ENCODE measurements at regions of chr19 and their contacts with region 1.

Region 1: DNA sequence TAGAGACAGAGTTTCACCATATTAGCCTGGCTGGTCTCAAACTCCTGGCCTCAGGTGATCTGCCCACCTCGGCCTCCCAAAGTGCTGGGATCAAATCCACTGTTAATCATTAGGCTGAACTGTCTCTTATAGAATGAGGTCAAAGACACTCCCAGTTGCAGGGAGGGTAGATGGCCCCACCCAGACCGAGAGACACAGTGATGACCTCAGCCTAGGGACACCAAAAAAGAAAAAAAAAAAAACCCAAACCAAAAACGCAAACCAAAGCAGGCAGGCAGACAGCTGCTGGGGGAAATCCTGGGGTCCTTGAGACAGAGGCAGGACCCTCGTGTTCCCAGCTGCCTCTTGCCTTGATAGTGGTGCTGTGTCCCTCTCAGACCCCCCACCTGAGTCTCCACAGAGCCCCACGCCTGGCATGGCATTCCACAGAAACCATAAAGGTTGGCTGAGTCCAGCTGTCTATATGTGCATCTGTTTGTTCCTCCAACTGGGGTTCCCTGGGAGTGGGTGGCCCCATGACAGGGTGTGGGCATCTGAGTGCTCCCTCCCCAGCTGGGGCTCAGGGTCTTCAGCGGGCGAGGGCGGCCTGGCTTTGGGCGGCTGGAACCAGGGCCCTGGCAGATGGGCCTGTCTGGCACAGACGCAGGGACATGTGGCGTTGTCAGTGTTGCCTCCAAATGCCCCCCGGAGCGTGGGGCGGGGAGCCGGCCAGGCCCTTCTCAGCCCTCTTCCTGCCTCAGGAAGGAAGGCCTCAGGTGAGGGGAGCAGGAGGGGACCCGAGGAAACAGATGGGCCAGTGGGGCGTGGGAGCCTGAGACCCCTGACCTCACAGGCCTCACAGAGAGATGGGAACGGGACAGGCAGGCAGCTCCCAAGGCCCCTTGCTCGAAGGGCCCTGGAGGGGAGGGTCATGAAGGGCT is 5.2 kb downstream of the DAND5 start:
- DNase-seq: no peak
- ATAC-seq: peak in 1 of 4 donors; percentile 22
- H3K4me3 ChIP-seq: no peak overlapping the region
- H3K27ac ChIP-seq: no peak overlapping the region
- H3K4me1 ChIP-seq: peaks cover 0 to 2% (median 0%) of the 10 kb centered on the region in 3 donors
- H3K27me3 ChIP-seq: no peaks in the 10 kb centered on the region
- CTCF ChIP-seq: no peak

Region 2: DNA sequence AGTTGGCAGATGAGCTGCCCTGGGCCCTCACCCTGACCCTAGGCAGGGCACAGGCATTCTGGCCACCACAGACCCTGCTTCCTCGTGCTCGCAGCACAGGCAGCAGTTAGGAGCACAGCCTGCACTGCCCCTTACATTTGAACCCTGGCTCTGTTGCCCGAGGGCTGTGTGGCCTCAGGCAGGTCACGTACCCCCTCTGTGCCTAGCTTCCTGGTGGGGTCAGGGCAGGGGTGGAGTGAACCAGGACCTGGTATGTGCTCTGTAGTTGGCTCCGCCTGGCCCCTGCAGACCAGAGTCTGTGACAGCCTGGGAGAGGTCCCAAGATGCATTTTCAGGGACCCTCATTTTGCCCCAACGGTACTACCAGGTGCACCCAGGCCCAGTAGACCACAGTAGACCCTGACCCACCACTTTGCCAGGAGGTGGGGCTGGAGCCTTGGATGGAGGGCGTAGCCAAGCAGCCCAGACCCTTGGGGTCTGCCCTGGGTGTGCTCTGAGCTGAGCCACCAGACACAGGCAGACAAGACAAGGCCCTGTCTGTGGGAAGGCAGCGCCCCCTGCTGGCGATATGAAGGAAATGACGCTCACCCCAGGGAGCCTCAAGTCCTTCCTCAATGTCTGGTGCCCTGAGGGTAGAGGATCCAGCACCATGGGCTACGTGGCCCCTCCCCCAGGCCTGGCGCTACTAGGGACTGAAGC is 119.0 kb after region 1 on chr19:
- intact Hi-C with region 1: loop called in 2 of 3 experiments (anchors 5 kb)
- DNase-seq: peak; percentile 59 to 88 (median 78)
- ATAC-seq: peak; percentile 77 to 82 (median 80)
- H3K4me3 ChIP-seq: no peak overlapping the region
- H3K27ac ChIP-seq: peak overlapping the region in 1 of 4 donors; percentile 23
- H3K4me1 ChIP-seq: no peaks in the 10 kb centered on the region
- H3K27me3 ChIP-seq: no peaks in the 10 kb centered on the region
- CTCF ChIP-seq: peak; percentile 94 to 97 (median 96)

Region 3: GRCh38 chr19:13262450-13262849 is 287.9 kb after region 1 on chr19:
- intact Hi-C with region 1: loop called in 1 of 3 experiments (anchors 10 kb)
- DNase-seq: peak in 1 of 6 donors; percentile 17
- ATAC-seq: peak; percentile 61 to 95 (median 84)
- H3K4me3 ChIP-seq: no peak overlapping the region
- H3K27ac ChIP-seq: no peak overlapping the region
- H3K4me1 ChIP-seq: no peaks in the 10 kb centered on the region
- H3K27me3 ChIP-seq: no peaks in the 10 kb centered on the region
- CTCF ChIP-seq: peak in 3 of 4 donors; percentile 18 to 35 (median 25)